ENCODE measurements at regions of chr16 and their contacts with region 1.

Region 1: DNA sequence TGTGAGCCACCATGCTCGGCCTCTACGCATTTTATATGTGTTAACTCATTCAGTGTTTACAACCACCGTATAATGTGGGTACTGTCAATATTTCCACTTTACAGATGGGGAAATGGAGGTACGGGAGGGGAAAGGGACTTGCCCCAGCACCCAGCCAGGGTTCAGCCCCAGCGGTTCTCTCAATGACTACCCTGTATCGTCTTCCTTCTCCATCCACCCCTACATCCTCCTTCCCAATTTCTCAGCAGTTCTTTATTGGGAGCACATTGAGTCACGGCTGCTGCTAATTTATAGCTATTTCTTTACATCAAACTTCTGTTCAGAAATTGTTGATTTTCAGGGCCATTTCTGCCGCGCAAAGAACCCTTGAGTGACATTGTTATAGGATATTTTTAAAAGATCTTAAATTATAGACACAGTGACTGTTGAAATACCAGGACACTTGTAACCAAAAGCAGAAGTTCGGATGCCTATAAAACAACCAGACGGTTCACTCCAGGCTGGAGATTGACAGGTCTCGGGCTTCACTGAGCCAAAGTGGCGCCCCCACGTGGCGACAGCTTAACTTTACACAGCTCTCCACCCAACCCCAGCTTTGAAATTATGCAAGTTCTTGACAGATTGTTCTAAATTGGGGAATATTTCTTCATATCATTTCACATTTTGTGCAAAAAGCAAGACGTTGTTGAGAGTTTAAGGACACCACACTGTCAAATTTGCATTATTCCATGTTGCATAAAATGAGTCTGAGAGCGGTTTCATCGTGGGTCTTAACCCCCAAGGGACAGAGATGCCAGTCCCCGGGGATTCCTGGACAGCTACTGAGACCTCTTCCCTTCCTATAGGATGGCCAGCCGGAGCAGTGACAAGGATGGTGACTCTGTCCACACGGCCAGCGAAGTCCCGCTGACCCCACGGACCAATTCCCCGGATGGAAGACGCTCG is 11.8 kb downstream of the SYT17 start:
- DNase-seq: peak in 1 of 2 experiments; percentile 77
- H3K4me3 ChIP-seq: no peak overlapping the region
- H3K27ac ChIP-seq: no peak overlapping the region
- H3K4me1 ChIP-seq: peaks cover 0 to under 1% (median 0%) of the 10 kb centered on the region in 4 experiments; a peak in 1 of 7 replicates
- H3K27me3 ChIP-seq: no peaks in the 10 kb centered on the region
- CTCF ChIP-seq: peak; percentile 75 to 82 (median 79)
- EP300 ChIP-seq: no peak
- POLR2A ChIP-seq: no peak
- RAD21 ChIP-seq: peak; percentile 51 to 68

Region 2: GRCh38 chr16:19086322-19087199 is 93.3 kb before region 1 on chr16:
- CTCF ChIA-PET with region 1: interaction called, 42 read pairs
- POLR2A ChIA-PET with region 1: interaction called, 3 read pairs
- DNase-seq: peak; percentile 58 to 96
- H3K4me3 ChIP-seq: peak overlapping the region in 3 of 4 experiments; percentile 28 to 53 (median 42); a peak in 5 of 8 replicates
- H3K27ac ChIP-seq: no peak overlapping the region
- H3K4me1 ChIP-seq: no peaks in the 10 kb centered on the region; a peak in 1 of 7 replicates
- H3K27me3 ChIP-seq: peaks cover 0 to 10% (median 7%) of the 10 kb centered on the region in 4 experiments; a peak in 5 of 7 replicates
- CTCF ChIP-seq: peak; percentile 79 to 96 (median 88)
- EP300 ChIP-seq: no peak
- POLR2A ChIP-seq: no peak
- RAD21 ChIP-seq: peak; percentile 93 to 98

Region 3: DNA sequence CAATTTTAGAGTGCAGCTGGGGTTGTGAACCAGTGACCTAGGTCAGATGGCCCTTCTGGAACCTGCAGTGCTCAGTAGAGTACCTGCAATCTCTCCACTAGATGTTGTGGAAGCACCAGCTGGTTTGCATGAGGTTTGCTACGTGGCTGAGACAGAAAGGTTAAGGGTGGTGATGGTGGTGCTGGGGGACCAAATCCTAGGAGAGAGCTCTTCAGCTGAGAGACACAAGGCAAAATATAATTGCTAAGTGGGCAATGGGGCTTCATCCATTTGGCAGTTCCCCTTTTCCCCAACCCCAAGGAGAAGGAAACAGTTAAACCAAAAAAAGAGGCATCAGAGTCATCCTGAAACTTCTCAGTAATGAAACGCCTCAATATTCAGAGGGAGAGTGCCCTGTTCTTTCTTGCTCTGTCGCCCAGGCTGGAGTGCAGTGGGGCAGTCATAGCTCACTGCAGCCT is 52.1 kb before region 1 on chr16:
- CTCF ChIA-PET with region 1: interaction called, 11 read pairs
- POLR2A ChIA-PET with region 1: no interaction called
- DNase-seq: no peak
- H3K4me3 ChIP-seq: no peak overlapping the region
- H3K27ac ChIP-seq: no peak overlapping the region
- H3K4me1 ChIP-seq: peaks cover 0 to 11% (median 4%) of the 10 kb centered on the region in 4 experiments; a peak in 5 of 7 replicates
- H3K27me3 ChIP-seq: no peaks in the 10 kb centered on the region
- CTCF ChIP-seq: no peak
- EP300 ChIP-seq: no peak
- POLR2A ChIP-seq: no peak
- RAD21 ChIP-seq: no peak

Region 4: DNA sequence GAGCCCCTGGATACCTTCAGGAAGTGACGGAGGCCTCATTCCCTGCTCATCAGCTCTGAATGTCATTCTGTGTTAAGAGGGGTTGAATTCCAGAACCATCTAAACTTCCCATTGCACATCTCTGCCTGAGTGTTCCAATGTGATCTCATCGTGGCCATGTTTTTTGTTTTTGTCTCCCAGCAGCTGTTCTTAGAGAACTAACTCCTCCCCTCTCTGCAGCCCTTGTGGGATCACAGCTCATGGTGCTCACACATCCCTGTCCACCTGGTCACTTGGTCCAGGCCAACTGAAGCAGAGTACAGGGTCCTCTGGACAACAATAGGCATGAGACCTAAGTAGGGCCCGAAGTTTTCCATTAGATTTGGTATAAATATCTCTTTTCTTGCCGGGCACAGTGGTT is 17.7 kb before region 1 on chr16:
- CTCF ChIA-PET with region 1: interaction called, 15 read pairs
- POLR2A ChIA-PET with region 1: interaction called, 4 read pairs
- DNase-seq: no peak
- H3K4me3 ChIP-seq: no peak overlapping the region
- H3K27ac ChIP-seq: no peak overlapping the region
- H3K4me1 ChIP-seq: no peaks in the 10 kb centered on the region; a peak in 1 of 7 replicates
- H3K27me3 ChIP-seq: peaks cover 0 to 5% (median 0%) of the 10 kb centered on the region in 4 experiments; a peak in 2 of 7 replicates
- CTCF ChIP-seq: no peak
- EP300 ChIP-seq: no peak
- POLR2A ChIP-seq: no peak
- RAD21 ChIP-seq: no peak

Region 5: DNA sequence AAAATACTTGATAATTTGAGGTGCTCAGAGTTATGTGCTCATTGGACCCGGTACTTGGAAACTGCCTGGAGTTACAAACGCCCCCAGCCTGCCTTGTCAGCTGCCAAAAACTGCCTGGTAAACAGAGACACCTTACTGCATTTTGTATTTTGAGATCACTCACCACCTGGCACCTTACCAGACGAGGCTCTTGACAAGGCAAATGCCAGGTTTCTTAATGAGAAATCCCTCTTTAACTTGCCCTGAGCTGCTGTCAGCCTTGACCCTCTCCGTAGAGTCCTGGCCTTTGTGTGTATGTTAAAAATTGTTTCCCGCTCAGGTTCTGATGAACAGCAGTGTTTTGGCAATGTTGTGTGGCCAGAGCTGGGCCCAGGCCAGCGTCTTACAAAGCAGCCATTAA is 17.1 kb after region 1 on chr16:
- CTCF ChIA-PET with region 1: interaction called, 13 read pairs
- POLR2A ChIA-PET with region 1: interaction called, 5 read pairs
- DNase-seq: no peak
- H3K4me3 ChIP-seq: no peak overlapping the region
- H3K27ac ChIP-seq: no peak overlapping the region
- H3K4me1 ChIP-seq: no peaks in the 10 kb centered on the region
- H3K27me3 ChIP-seq: no peaks in the 10 kb centered on the region
- CTCF ChIP-seq: no peak
- EP300 ChIP-seq: no peak
- POLR2A ChIP-seq: no peak
- RAD21 ChIP-seq: no peak

Region 6: DNA sequence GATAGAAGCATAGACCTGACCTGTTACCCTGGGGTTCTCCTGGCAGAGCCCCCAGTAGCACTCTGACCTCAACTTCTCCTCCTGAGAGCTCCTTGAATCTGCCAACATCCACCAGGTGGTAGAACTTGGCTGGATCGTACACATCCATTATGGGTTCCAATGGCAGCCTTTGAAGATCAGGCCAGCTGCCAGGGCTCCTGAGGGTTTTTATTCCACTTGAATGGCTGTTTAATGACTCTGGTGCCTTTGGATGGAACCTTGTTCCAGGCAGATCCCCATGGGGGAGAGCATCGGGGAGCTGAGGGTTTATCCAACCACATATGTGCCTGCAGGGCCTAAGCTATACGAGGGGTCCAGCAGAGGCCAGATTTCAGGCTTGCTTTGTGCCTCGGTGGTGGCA is 58.6 kb after region 1 on chr16:
- CTCF ChIA-PET with region 1: interaction called, 12 read pairs
- POLR2A ChIA-PET with region 1: no interaction called
- DNase-seq: no peak
- H3K4me3 ChIP-seq: no peak overlapping the region
- H3K27ac ChIP-seq: no peak overlapping the region
- H3K4me1 ChIP-seq: no peaks in the 10 kb centered on the region
- H3K27me3 ChIP-seq: no peaks in the 10 kb centered on the region
- CTCF ChIP-seq: no peak
- EP300 ChIP-seq: no peak
- POLR2A ChIP-seq: no peak
- RAD21 ChIP-seq: no peak

Region 7: DNA sequence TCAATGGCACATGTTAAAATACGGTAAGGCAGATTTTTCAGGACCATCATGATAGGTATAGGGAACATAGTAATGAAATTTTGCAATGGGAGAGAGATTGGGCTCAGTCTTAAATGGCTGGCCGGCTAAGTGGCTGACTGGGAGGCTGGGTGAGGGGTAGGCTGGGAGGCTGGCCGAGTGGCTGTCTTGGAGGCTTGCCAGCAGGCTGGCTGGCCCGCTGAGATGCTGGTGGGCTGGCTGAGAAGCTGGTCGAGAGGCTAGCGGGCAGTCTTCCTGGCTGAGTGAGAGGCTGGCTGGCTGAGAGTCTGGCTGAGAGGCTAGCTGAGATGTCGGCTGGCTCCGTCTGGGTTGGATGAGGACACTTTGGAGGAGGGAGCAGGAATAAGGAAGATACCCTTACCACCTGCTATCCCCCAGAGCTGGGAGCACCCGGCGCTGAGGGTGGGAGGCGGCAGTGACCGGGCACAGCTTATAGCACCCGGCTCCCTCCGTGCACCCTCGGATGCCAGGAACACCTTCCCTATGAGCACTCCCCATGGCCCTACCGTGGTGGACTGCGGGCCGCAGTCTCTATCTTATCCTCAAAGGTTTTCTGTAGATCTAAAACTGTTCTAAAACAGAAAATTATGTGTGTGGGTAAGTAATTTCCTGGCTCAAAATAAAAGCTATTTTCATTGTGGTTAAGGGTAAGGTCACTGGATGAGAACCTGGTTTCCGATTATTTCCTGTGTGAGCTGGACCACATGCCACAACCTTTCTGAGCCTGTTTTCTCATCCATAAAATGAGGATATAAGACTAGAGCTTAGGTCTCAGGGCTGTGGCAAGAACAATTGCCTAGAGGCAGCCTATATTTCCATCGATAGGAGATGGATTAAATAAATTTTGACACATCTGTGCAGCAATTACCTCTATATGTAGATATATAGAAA is 203.3 kb after region 1 on chr16:
- CTCF ChIA-PET with region 1: interaction called, 15 read pairs
- POLR2A ChIA-PET with region 1: no interaction called
- DNase-seq: no peak
- H3K4me3 ChIP-seq: no peak overlapping the region
- H3K27ac ChIP-seq: no peak overlapping the region
- H3K4me1 ChIP-seq: no peaks in the 10 kb centered on the region
- H3K27me3 ChIP-seq: no peaks in the 10 kb centered on the region
- CTCF ChIP-seq: no peak
- EP300 ChIP-seq: no peak
- POLR2A ChIP-seq: no peak
- RAD21 ChIP-seq: no peak

Region 8: GRCh38 chr16:19396555-19397011 is 216.8 kb after region 1 on chr16:
- CTCF ChIA-PET with region 1: no interaction called
- POLR2A ChIA-PET with region 1: no interaction called
- DNase-seq: no peak
- H3K4me3 ChIP-seq: no peak overlapping the region
- H3K27ac ChIP-seq: no peak overlapping the region
- H3K4me1 ChIP-seq: no peaks in the 10 kb centered on the region
- H3K27me3 ChIP-seq: no peaks in the 10 kb centered on the region
- CTCF ChIP-seq: no peak
- EP300 ChIP-seq: no peak
- POLR2A ChIP-seq: no peak
- RAD21 ChIP-seq: no peak

Measured in H1 (cell line).